Activated naive CD4-positive, alpha-beta T cell treated with anti-CD3 and anti-CD28 coated beads for 36 hours (primary cell): ENCODE measurements at regions of chr15 and their contacts with region 1.

Region 1: GRCh38 chr15:82749951-82750830 is 40.5 kb upstream of the AP3B2 start:
- DNase-seq: peak; percentile 90
- H3K4me3 Mint-ChIP-seq: peak overlapping the region; percentile 99
- H3K27ac Mint-ChIP-seq: peak overlapping the region; percentile 94
- H3K4me1 Mint-ChIP-seq: peaks cover 45% of the 10 kb centered on the region
- H3K27me3 Mint-ChIP-seq: no peaks in the 10 kb centered on the region

Region 2: GRCh38 chr15:82680200-82681102 is 69.7 kb before region 1 on chr15:
- CTCF ChIA-PET with region 1: no interaction called
- intact Hi-C with region 1: loop called (anchors 1 kb)
- DNase-seq: peak; percentile 86
- H3K4me3 Mint-ChIP-seq: peak overlapping the region; percentile 88
- H3K27ac Mint-ChIP-seq: peak overlapping the region; percentile 47
- H3K4me1 Mint-ChIP-seq: peaks cover 7% of the 10 kb centered on the region
- H3K27me3 Mint-ChIP-seq: peaks cover 2% of the 10 kb centered on the region

Region 3: GRCh38 chr15:82832601-82833361 is 82.6 kb after region 1 on chr15:
- CTCF ChIA-PET with region 1: no interaction called
- intact Hi-C with region 1: loop called (anchors 1 kb)
- DNase-seq: peak; percentile 74
- H3K4me3 Mint-ChIP-seq: no peak overlapping the region
- H3K27ac Mint-ChIP-seq: peak overlapping the region; percentile 46
- H3K4me1 Mint-ChIP-seq: peaks cover 27% of the 10 kb centered on the region
- H3K27me3 Mint-ChIP-seq: no peaks in the 10 kb centered on the region

Region 4: GRCh38 chr15:82999905-83000671 is 249.9 kb after region 1 on chr15:
- CTCF ChIA-PET with region 1: interaction called, 3 read pairs
- intact Hi-C with region 1: loop called (anchors 5 kb)
- DNase-seq: peak; percentile 53
- H3K4me3 Mint-ChIP-seq: peak overlapping the region; percentile 40
- H3K27ac Mint-ChIP-seq: no peak overlapping the region
- H3K4me1 Mint-ChIP-seq: peaks cover 6% of the 10 kb centered on the region
- H3K27me3 Mint-ChIP-seq: no peaks in the 10 kb centered on the region

Region 5: DNA sequence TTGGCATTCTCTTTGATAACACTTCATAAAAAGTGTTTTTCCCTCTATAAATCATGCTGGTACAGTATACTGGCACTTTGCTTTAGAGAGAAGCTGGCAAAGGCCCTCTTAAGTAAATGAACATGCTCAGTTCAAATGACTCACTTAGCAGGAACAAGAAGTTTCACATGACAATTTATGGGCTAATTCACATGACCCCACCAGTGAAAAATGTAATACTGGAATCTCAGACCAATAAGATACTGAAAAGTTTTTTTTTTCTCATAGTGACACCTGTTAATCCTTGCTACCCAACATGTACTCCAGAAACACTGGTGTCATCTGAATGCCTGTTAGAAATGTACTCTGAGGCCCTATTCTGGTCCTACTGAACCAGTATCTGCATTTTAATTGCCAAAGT is 303.0 kb after region 1 on chr15:
- CTCF ChIA-PET with region 1: no interaction called
- intact Hi-C with region 1: no loop called
- DNase-seq: no peak
- H3K4me3 Mint-ChIP-seq: no peak overlapping the region
- H3K27ac Mint-ChIP-seq: no peak overlapping the region
- H3K4me1 Mint-ChIP-seq: peaks cover 11% of the 10 kb centered on the region
- H3K27me3 Mint-ChIP-seq: no peaks in the 10 kb centered on the region